Natural killer cell (primary cell): ENCODE measurements at regions of chr15 and their contacts with region 1.

Region 1: GRCh38 chr15:36029606-36030210 is 483.7 kb upstream of the DPH6 start:
- DNase-seq: no peak
- ATAC-seq: no peak
- H3K4me3 ChIP-seq: no peak overlapping the region
- H3K4me3 Mint-ChIP-seq: no peak overlapping the region
- H3K27ac ChIP-seq: no peak overlapping the region
- H3K27ac Mint-ChIP-seq: no peak overlapping the region
- H3K4me1 ChIP-seq: no peaks in the 10 kb centered on the region
- H3K4me1 Mint-ChIP-seq: no peaks in the 10 kb centered on the region
- H3K27me3 ChIP-seq: no peaks in the 10 kb centered on the region
- H3K27me3 Mint-ChIP-seq: no peaks in the 10 kb centered on the region
- CTCF ChIP-seq: no peak

Region 2: GRCh38 chr15:35746121-35746520 is 283.6 kb before region 1 on chr15:
- intact Hi-C with region 1: no loop called
- DNase-seq: no peak
- ATAC-seq: no peak
- H3K4me3 ChIP-seq: no peak overlapping the region
- H3K4me3 Mint-ChIP-seq: no peak overlapping the region
- H3K27ac ChIP-seq: no peak overlapping the region
- H3K27ac Mint-ChIP-seq: no peak overlapping the region
- H3K4me1 ChIP-seq: no peaks in the 10 kb centered on the region
- H3K4me1 Mint-ChIP-seq: no peaks in the 10 kb centered on the region
- H3K27me3 ChIP-seq: no peaks in the 10 kb centered on the region
- H3K27me3 Mint-ChIP-seq: no peaks in the 10 kb centered on the region
- CTCF ChIP-seq: no peak

Region 3: GRCh38 chr15:35834216-35834830 is 195.4 kb before region 1 on chr15:
- intact Hi-C with region 1: no loop called
- DNase-seq: no peak
- ATAC-seq: no peak
- H3K4me3 ChIP-seq: no peak overlapping the region
- H3K4me3 Mint-ChIP-seq: no peak overlapping the region
- H3K27ac ChIP-seq: no peak overlapping the region
- H3K27ac Mint-ChIP-seq: no peak overlapping the region
- H3K4me1 ChIP-seq: no peaks in the 10 kb centered on the region
- H3K4me1 Mint-ChIP-seq: no peaks in the 10 kb centered on the region
- H3K27me3 ChIP-seq: no peaks in the 10 kb centered on the region
- H3K27me3 Mint-ChIP-seq: no peaks in the 10 kb centered on the region
- CTCF ChIP-seq: no peak

Region 4: DNA sequence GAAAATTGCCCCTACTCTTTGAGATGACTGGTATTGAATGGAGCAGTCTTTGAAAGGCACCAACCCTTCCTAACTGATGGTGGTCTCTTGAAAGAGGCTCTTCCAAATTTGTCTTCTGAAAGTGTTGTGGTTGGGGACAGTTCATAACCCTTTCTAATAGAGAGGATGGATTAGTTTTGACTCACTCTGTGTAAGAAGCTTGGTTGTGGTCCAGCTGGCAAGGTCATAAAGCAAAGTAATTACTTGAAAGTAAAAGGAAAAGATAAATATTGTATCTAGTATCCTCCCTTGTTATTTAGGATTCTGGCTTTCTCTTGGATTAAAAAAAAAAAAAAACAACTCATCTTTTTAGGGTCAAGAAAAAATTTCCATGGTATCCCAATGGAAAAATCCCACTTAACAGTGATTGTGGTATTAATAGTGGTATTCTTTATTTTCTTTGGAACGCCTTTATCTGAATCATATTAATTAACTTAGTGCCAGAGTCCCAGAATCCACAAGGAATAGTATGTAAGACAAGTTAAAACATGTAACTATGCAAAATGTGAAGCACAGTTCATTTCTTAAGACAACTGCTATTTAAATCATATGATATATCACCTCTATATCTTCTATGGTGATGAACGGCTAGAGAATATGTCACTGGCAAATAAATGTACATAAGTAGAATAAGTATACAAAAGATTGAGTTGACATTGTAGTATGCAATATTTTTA is 80.4 kb after region 1 on chr15:
- intact Hi-C with region 1: loop called (anchors 10 kb)
- DNase-seq: no peak
- ATAC-seq: no peak
- H3K4me3 ChIP-seq: no peak overlapping the region
- H3K4me3 Mint-ChIP-seq: no peak overlapping the region
- H3K27ac ChIP-seq: no peak overlapping the region
- H3K27ac Mint-ChIP-seq: no peak overlapping the region
- H3K4me1 ChIP-seq: no peaks in the 10 kb centered on the region
- H3K4me1 Mint-ChIP-seq: no peaks in the 10 kb centered on the region
- H3K27me3 ChIP-seq: no peaks in the 10 kb centered on the region
- H3K27me3 Mint-ChIP-seq: no peaks in the 10 kb centered on the region
- CTCF ChIP-seq: no peak

Region 5: DNA sequence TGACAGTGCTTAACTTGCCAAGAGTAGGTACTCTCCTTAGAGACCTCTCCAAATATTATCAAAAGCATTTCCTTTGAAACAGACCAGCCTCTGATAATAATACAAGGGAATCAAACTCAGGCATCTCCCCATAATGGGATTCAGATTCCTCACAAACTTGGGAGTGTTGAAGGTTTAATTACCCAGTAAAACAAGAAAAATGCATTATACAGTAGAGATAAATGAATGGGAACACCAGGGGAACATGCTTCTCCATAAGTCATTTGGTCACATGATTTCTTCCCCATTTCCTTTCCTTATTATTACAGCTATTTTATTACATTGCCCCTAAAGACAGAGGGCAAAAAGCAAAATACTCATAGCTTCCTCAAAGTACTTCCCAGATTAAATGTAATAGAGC is 224.7 kb after region 1 on chr15:
- intact Hi-C with region 1: no loop called
- DNase-seq: no peak
- ATAC-seq: no peak
- H3K4me3 ChIP-seq: no peak overlapping the region
- H3K4me3 Mint-ChIP-seq: no peak overlapping the region
- H3K27ac ChIP-seq: no peak overlapping the region
- H3K27ac Mint-ChIP-seq: no peak overlapping the region
- H3K4me1 ChIP-seq: no peaks in the 10 kb centered on the region
- H3K4me1 Mint-ChIP-seq: no peaks in the 10 kb centered on the region
- H3K27me3 ChIP-seq: no peaks in the 10 kb centered on the region
- H3K27me3 Mint-ChIP-seq: no peaks in the 10 kb centered on the region
- CTCF ChIP-seq: no peak